Activated CD4-positive, alpha-beta memory T cell treated with anti-CD3 and anti-CD28 coated beads, Interleukin-2, amount 10 ng/mL, durations not matched to agents 7 days and 5 days (primary cell): ENCODE measurements at regions of chr22 and their contacts with region 1.

Region 1: GRCh38 chr22:41800348-41801146 is at the start of gene CCDC134:
- DNase-seq: peak; percentile 93
- H3K4me3 Mint-ChIP-seq: peak within 1 kb of the TSS; percentile 91
- H3K27ac Mint-ChIP-seq: peak within 1 kb of the TSS; percentile 90
- H3K4me1 Mint-ChIP-seq: peaks cover 44% of the 10 kb centered on the region
- H3K27me3 Mint-ChIP-seq: no peaks in the 10 kb centered on the region
- total RNA-seq, gene CCDC134: 17.9 to 20.3 TPM

Region 2: GRCh38 chr22:41697126-41697775 is 103.3 kb before region 1 on chr22:
- CTCF ChIA-PET with region 1: interaction called, 53 read pairs
- POLR2A ChIA-PET with region 1: interaction called, 15 read pairs
- DNase-seq: peak; percentile 91
- H3K4me3 Mint-ChIP-seq: no peak overlapping the region
- H3K27ac Mint-ChIP-seq: peak overlapping the region; percentile 68
- H3K4me1 Mint-ChIP-seq: peaks cover 18% of the 10 kb centered on the region
- H3K27me3 Mint-ChIP-seq: peaks cover 4% of the 10 kb centered on the region

Region 3: GRCh38 chr22:41780746-41781505 is 19.6 kb before region 1 on chr22:
- CTCF ChIA-PET with region 1: interaction called, 47 read pairs
- POLR2A ChIA-PET with region 1: interaction called, 366 read pairs
- DNase-seq: peak; percentile 96
- H3K4me3 Mint-ChIP-seq: peak overlapping the region; percentile 85
- H3K27ac Mint-ChIP-seq: peak overlapping the region; percentile 97
- H3K4me1 Mint-ChIP-seq: peaks cover 46% of the 10 kb centered on the region
- H3K27me3 Mint-ChIP-seq: no peaks in the 10 kb centered on the region

Region 4: GRCh38 chr22:41832553-41833368 is 32.2 kb after region 1 on chr22 and contains the start of gene SREBF2:
- CTCF ChIA-PET with region 1: interaction called, 5 read pairs
- POLR2A ChIA-PET with region 1: interaction called, 79 read pairs
- DNase-seq: peak; percentile 100
- H3K4me3 Mint-ChIP-seq: peak within 1 kb of the TSS; percentile 92
- H3K27ac Mint-ChIP-seq: peak within 1 kb of the TSS; percentile 96
- H3K4me1 Mint-ChIP-seq: peaks cover 50% of the 10 kb centered on the region
- H3K27me3 Mint-ChIP-seq: no peaks in the 10 kb centered on the region
- total RNA-seq, gene SREBF2: 150 to 157 TPM